Heart left ventricle (tissue), 16 donors: ENCODE measurements at regions of chr1 and their contacts with region 1.

Region 1: GRCh38 chr1:47997289-47998200 is at the start of gene TRABD2B:
- DNase-seq: peak; percentile 77 to 91 (median 82)
- ATAC-seq: peak; percentile 58 to 89 (median 84)
- H3K4me3 ChIP-seq: peak within 1 kb of the TSS; percentile 49 to 86 (median 63)
- H3K27ac ChIP-seq: peak within 1 kb of the TSS in 11 of 12 donors; percentile 34 to 76 (median 63)
- H3K4me1 ChIP-seq: peaks cover 0 to 23% (median 7%) of the 10 kb centered on the region in 12 donors
- H3K27me3 ChIP-seq: peaks cover 3 to 48% (median 10%) of the 10 kb centered on the region in 9 donors
- CTCF ChIP-seq: peak; percentile 89 to 98 (median 94)
- POLR2A ChIP-seq: peak in 1 of 2 donors; percentile 11
- total RNA-seq, gene TRABD2B: 0.31 to 1.1 (median 0.87) TPM

Region 2: DNA sequence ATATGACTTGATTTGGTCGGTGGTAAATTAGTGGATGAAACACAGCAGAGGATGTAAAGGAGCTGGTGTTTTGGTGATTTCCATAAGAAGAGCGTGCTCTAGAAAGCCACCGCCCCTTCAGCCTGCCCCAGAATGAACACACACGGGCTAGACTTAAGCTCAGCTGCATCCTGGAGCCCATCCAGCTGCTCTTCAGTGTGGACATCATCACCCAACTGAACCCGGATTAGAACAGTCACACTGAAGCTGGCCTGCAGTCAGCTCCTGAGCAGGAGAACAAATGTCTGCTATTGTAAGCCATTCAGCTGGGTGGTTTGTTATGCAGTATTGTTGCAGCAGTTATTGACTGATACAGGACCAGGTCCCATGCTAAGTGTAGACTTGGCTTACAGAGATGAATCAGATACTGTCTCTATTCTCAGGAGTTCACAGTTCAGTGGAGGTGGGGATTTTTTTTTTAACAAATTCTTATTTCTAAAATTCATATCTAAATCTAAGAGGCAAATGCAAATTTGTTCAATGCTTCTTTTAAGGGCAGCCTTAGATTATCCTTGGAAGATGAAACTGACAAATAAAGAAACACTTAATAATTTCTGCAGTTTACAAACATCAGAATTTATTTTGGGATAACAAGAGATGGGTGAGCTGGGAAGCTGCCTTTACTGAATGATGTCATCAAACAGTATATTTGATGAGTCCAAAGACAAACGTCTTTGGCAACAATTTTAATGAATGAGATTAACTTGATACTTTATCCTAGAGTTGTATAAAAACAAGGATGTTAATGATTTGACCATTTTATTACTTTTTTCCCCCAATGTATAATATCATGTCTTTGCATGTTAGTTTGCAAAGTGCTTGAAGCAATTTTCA is 251.6 kb before region 1 on chr1:
- intact Hi-C with region 1: loop called in 2 of 10 experiments (anchors 5 to 10 kb)
- DNase-seq: peak in 1 of 5 donors; percentile 62
- ATAC-seq: peak in 2 of 4 donors; percentile 42 to 53
- H3K4me3 ChIP-seq: no peak overlapping the region
- H3K27ac ChIP-seq: no peak overlapping the region
- H3K4me1 ChIP-seq: peaks cover 0 to under 1% (median 0%) of the 10 kb centered on the region in 12 donors
- H3K27me3 ChIP-seq: peaks cover 0 to 4% (median 0%) of the 10 kb centered on the region in 9 donors
- CTCF ChIP-seq: no peak
- POLR2A ChIP-seq: no peak

Region 3: DNA sequence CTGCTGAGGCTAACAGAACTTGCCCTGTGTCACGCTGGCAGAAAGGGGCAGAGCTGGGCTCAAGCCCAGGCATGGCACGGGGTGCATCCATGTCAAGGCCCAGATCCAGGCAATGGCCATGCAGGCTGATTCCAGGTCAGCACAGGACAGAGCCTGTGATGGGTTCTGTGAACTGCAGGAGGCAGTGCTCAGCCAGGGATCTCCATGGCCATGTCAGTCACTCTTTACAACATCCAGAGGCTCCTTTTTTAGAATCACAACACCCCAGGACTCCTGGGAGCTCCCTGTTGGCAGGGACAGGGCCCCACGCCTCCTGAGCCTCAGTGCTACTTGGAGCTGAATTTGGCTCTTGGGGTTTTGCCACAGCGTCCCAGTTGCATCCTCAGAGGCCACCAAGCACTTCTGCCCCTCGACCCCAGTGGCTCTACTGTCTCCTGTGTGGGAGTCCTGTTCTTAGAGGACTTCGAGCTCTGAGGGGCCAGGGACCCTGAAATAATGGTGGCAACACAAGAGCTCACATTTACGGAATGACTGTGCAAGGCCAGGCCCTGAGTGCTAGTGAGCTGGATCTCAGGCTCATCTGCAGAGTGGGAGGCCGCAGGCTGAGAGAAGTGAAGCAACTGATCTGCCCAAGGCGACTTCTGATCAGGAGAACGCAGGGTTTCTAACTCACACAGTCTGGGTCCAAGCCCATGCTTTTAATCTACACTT is 211.8 kb before region 1 on chr1:
- intact Hi-C with region 1: loop called in 4 of 10 experiments (anchors 2 to 10 kb)
- DNase-seq: peak in 4 of 5 donors; percentile 30 to 64 (median 39)
- ATAC-seq: peak; percentile 48 to 80 (median 80)
- H3K4me3 ChIP-seq: no peak overlapping the region
- H3K27ac ChIP-seq: peak overlapping the region in 2 of 12 donors; percentile 5 to 28
- H3K4me1 ChIP-seq: peaks cover 0 to 54% (median 30%) of the 10 kb centered on the region in 12 donors
- H3K27me3 ChIP-seq: no peaks in the 10 kb centered on the region
- CTCF ChIP-seq: peak; percentile 10 to 64 (median 44)
- POLR2A ChIP-seq: no peak

Region 4: DNA sequence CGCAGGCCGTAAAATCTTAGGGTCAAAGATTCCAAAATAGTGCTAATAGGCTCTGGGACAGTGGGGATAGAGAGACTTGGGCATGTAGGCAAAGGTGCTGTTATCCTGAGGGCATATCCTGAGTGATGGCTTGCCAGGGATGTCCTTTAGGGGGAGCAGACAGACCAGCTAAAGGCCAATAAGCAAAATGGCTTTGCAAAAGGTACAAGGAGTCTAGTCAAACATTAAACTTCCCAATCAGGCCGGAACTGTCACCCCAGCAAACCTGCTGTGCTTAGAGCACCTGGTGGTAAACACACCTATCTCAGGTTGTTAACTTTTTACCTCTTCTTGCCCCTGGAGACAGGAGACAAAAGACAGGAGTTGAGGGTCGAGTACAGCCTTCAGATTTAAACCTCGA is 49.4 kb before region 1 on chr1:
- intact Hi-C with region 1: loop called in 1 of 10 experiments (anchors 10 kb)
- DNase-seq: no peak
- ATAC-seq: peak in 1 of 4 donors; percentile 44
- H3K4me3 ChIP-seq: no peak overlapping the region
- H3K27ac ChIP-seq: no peak overlapping the region
- H3K4me1 ChIP-seq: peaks cover 0 to 12% (median 0%) of the 10 kb centered on the region in 12 donors
- H3K27me3 ChIP-seq: no peaks in the 10 kb centered on the region
- CTCF ChIP-seq: peak in 5 of 12 donors; percentile 17 to 40 (median 28)
- POLR2A ChIP-seq: no peak

Region 5: DNA sequence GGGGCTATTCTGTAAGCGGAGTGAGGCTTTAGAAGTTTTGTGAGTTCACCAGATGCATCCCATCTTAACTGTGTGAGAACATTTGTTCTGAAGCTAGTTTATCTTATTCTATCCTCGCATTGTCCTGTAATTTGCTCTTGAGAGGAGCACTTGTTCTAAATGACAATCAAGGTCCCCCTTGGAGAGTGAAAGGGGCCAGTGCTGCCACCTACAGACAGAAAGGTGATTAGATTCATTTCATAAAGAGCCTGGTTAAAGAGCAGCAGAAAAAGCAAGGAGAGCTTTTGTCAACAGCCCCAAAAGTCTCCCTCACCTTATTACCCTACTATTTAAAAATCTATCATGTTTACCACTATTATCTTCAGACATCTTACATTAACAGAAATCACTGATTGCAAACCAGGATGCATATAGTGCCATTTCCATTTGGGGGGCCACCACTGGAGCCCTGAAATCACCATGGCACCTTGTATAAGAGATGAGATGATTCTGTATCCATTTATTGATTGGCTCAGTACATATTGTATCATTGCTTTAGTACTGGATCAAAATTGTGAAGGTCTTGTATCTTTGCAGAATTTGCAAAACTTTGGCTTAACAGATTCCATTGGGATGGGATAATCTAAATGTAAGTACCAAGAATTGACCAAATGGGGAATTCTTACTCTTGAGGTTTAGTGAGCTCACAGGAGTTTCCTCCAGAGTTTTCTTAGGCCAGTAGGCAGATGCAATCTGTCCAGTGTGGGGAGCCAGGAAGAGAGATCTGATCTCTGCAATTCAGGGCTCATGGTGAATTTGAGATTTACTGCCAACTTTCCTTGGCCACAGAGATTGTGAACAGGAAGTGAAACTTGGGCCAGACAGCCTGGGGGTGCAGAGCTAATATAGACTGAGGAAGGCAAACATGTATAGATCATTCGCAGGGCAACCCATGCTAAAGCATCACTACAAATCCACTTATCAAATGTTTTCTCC is 63.9 kb after region 1 on chr1:
- intact Hi-C with region 1: loop called (anchors 1 to 10 kb)
- DNase-seq: peak in 4 of 5 donors; percentile 33 to 57 (median 42)
- ATAC-seq: peak; percentile 65 to 86 (median 74)
- H3K4me3 ChIP-seq: no peak overlapping the region
- H3K27ac ChIP-seq: no peak overlapping the region
- H3K4me1 ChIP-seq: peaks cover 0 to 4% (median 0%) of the 10 kb centered on the region in 12 donors
- H3K27me3 ChIP-seq: no peaks in the 10 kb centered on the region
- CTCF ChIP-seq: peak; percentile 50 to 82 (median 74)
- POLR2A ChIP-seq: no peak

Region 6: GRCh38 chr1:48202030-48202752 is 204.6 kb after region 1 on chr1:
- intact Hi-C with region 1: loop called in 1 of 10 experiments (anchors 5 kb)
- DNase-seq: peak; percentile 47 to 73 (median 62)
- ATAC-seq: peak; percentile 37 to 81 (median 67)
- H3K4me3 ChIP-seq: no peak overlapping the region
- H3K27ac ChIP-seq: no peak overlapping the region
- H3K4me1 ChIP-seq: no peaks in the 10 kb centered on the region
- H3K27me3 ChIP-seq: peaks cover 0 to 6% (median 0%) of the 10 kb centered on the region in 9 donors
- CTCF ChIP-seq: peak; percentile 75 to 88 (median 84)
- POLR2A ChIP-seq: no peak